ENCODE measurements at regions of chr4 and their contacts with region 1.

Region 1: DNA sequence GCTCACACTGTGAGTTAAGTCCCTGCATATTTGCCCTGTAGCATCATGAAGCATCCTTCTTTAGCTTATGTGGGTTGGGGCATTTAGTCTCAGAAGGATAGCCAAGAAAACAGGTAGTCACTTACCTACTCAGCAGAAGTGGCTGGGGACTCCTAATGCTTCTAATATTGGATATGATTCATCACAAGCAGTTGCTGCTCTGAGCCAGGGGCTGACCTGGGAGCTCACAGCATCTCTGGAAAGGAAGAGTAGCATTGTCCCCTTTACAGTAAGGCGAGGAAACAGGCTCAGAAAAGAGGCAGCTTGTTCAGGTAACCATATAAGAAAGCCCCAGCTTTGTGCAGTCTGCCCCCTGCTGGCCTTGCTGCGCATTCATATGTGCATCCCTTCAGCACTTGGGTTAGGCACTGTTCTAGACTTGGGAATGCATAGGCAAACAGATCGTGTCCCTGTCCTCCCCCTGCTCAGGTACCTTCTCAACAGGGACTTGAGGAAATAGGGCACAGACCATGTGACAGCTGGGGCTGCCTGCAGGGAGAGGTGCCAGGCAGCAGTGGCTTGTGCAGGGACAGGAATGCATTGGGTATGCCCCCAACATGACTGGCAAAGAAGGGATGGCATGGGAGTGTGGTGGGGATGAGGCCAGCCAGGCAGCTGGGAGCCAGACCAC is 35.7 kb upstream of the TBC1D14 start:
- DNase-seq: peak; percentile 76
- CTCF ChIP-seq: peak; percentile 87

Region 2: GRCh38 chr4:6709230-6710114 is 164.5 kb before region 1 on chr4 and contains the start of gene MRFAP1L1:
- CTCF ChIA-PET with region 1: interaction called, 10 read pairs
- POLR2A ChIA-PET with region 1: no interaction called
- DNase-seq: peak; percentile 93
- CTCF ChIP-seq: no peak

Region 3: GRCh38 chr4:6732441-6733357 is 141.2 kb before region 1 on chr4:
- CTCF ChIA-PET with region 1: interaction called, 26 read pairs
- POLR2A ChIA-PET with region 1: no interaction called
- DNase-seq: no peak
- CTCF ChIP-seq: no peak

Region 4: GRCh38 chr4:6783053-6783981 is 90.6 kb before region 1 on chr4:
- CTCF ChIA-PET with region 1: interaction called, 35 read pairs
- POLR2A ChIA-PET with region 1: no interaction called
- DNase-seq: peak; percentile 96
- CTCF ChIP-seq: peak; percentile 22

Region 5: DNA sequence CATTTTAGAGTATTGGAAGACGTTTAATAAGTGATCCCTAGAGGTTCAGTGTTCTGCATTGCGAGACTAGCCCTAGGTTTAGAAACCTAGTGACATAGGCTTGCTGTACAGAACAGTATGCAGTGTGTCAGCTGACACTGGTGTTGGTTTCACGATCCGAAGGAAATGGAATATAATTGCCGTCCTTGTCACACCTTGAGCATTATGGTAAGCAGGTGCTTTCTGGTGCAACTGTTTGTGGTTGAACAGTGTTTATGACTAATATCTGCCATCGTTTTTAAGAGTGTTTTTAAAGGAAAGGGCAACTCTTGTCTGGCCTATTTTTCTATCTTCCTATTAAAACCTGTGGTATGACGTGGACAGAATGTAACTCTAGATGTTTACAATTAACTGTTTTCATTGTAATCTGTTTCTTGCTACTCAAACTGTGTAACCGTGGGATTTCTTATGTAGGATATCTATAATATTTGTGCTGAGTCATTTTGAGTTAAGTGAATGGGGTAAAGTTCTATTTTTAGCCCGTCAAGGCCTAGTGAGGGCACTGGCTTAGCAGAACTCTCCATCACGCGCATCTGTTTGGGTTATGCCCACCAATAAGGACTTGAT is 18.1 kb before region 1 on chr4:
- CTCF ChIA-PET with region 1: interaction called, 38 read pairs
- POLR2A ChIA-PET with region 1: no interaction called
- DNase-seq: peak; percentile 68
- CTCF ChIP-seq: no peak

Region 6: GRCh38 chr4:6909073-6909965 is 35.4 kb after region 1 on chr4 and contains the start of gene TBC1D14:
- CTCF ChIA-PET with region 1: interaction called, 19 read pairs
- POLR2A ChIA-PET with region 1: no interaction called
- DNase-seq: peak; percentile 96
- CTCF ChIP-seq: no peak